B cell (primary cell): ENCODE measurements at regions of chr5 and their contacts with region 1.

Region 1: DNA sequence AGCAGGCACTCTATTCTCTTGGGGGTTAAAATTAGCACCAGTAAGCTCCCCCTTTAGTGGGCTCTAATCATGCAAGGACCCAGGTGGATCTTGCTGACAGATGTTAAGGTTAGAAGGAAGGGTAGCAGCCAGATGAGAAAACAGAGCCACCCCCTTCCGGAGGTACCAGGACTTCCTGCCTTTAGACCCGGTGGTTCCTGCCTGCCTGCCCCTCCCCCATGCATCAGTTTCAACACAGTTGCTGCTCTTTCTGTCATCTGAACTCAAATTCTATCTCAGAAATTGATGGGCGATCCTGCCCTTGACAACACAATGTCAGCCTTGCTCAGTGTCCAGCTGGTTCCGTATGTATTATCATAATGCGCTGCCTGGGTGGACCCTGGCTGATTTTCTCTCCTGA is 287.3 kb downstream of the EBF1 start:
- DNase-seq: peak; percentile 89
- ATAC-seq: peak; percentile 89
- H3K4me3 ChIP-seq: peak overlapping the region in 2 of 5 experiments; percentile 32 to 43
- H3K4me3 Mint-ChIP-seq: peak overlapping the region; percentile 72
- H3K27ac ChIP-seq: peak overlapping the region; percentile 80 to 87
- H3K27ac Mint-ChIP-seq: peak overlapping the region; percentile 93
- H3K4me1 ChIP-seq: peaks cover 89 to 100% of the 10 kb centered on the region in 2 donors
- H3K4me1 Mint-ChIP-seq: peaks cover 98% of the 10 kb centered on the region
- H3K27me3 ChIP-seq: no peaks in the 10 kb centered on the region
- H3K27me3 Mint-ChIP-seq: no peaks in the 10 kb centered on the region
- CTCF ChIP-seq: no peak

Region 2: GRCh38 chr5:158529454-158529853 is 283.0 kb before region 1 on chr5:
- CTCF ChIA-PET with region 1: no interaction called
- POLR2A ChIA-PET with region 1: no interaction called
- intact Hi-C with region 1: no loop called
- DNase-seq: no peak
- ATAC-seq: no peak
- H3K4me3 ChIP-seq: no peak overlapping the region
- H3K4me3 Mint-ChIP-seq: no peak overlapping the region
- H3K27ac ChIP-seq: no peak overlapping the region
- H3K27ac Mint-ChIP-seq: no peak overlapping the region
- H3K4me1 ChIP-seq: no peaks in the 10 kb centered on the region
- H3K4me1 Mint-ChIP-seq: no peaks in the 10 kb centered on the region
- H3K27me3 ChIP-seq: no peaks in the 10 kb centered on the region
- H3K27me3 Mint-ChIP-seq: no peaks in the 10 kb centered on the region
- CTCF ChIP-seq: no peak

Region 3: DNA sequence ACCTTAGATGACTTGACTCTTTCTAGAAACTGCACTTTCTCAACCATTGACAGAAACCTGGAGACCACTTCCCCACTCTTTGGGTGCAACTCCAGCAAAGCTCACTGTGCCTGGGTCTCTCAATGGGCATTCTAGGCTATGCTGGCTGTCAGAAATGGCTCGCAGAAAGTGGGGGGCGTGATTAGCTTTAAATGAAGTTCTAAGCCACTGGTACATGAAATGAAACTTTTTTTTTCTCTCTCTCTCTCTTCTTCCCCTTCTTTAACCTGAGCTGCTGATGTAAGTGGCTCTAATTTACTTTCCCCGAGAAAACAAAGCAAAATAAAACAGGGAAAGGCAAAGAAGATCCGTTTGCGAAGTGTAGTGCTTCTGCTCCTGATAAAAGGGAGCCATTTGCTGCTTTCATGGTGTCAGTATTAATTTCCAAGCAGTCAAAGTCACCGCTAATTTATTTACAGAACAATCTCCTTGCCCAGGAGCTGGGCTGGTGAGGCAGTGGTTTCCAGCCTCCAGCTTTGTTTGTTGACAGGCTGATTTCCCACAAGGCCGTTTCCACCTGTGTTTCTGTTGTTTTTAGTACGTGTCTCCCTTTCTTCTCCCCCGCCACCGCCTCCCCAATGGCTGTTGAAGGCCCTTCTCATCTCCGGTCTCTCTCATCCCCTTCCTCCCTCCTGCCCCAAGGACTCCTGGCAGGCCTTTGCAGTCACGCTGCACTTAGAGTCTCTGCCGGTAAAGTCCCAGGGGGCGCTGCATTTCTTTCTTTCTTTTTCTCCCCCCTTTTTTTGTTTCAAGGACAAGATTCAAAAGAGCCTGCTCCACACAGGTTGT is 135.6 kb before region 1 on chr5:
- CTCF ChIA-PET with region 1: no interaction called
- POLR2A ChIA-PET with region 1: no interaction called
- intact Hi-C with region 1: no loop called
- DNase-seq: peak; percentile 62
- ATAC-seq: peak; percentile 76
- H3K4me3 ChIP-seq: peak overlapping the region; percentile 15 to 48 (median 41)
- H3K4me3 Mint-ChIP-seq: peak overlapping the region; percentile 76
- H3K27ac ChIP-seq: peak overlapping the region; percentile 62 to 89
- H3K27ac Mint-ChIP-seq: peak overlapping the region; percentile 87
- H3K4me1 ChIP-seq: peaks cover 22 to 28% of the 10 kb centered on the region in 2 donors
- H3K4me1 Mint-ChIP-seq: peaks cover 28% of the 10 kb centered on the region
- H3K27me3 ChIP-seq: no peaks in the 10 kb centered on the region
- H3K27me3 Mint-ChIP-seq: no peaks in the 10 kb centered on the region
- CTCF ChIP-seq: peak; percentile 8

Region 4: DNA sequence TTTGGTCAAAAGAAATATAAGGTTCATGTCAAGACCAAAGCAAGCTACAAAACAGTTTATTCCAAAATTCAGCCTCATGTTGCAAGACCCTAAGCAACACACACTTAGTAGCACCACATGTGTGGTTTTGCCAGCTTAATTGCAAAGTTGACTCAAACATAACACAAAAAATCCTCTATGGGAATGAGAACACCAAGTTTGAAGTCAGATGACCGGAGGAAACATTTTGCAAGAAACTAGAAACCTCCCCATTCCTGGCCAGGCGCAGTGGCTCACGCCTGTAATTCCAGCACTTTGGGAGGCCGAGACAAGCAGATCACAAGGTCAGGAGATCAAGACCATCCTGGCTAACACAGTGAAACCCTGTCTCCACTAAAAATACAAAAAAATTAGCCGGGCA is 25.5 kb after region 1 on chr5:
- CTCF ChIA-PET with region 1: interaction called, 3 read pairs
- POLR2A ChIA-PET with region 1: interaction called, 3 read pairs
- intact Hi-C with region 1: loop called (anchors 2 kb)
- DNase-seq: no peak
- ATAC-seq: no peak
- H3K4me3 ChIP-seq: no peak overlapping the region
- H3K4me3 Mint-ChIP-seq: no peak overlapping the region
- H3K27ac ChIP-seq: no peak overlapping the region
- H3K27ac Mint-ChIP-seq: no peak overlapping the region
- H3K4me1 ChIP-seq: peaks cover 10 to 14% of the 10 kb centered on the region in 2 donors
- H3K4me1 Mint-ChIP-seq: peaks cover 71% of the 10 kb centered on the region
- H3K27me3 ChIP-seq: no peaks in the 10 kb centered on the region
- H3K27me3 Mint-ChIP-seq: no peaks in the 10 kb centered on the region
- CTCF ChIP-seq: no peak

Region 5: DNA sequence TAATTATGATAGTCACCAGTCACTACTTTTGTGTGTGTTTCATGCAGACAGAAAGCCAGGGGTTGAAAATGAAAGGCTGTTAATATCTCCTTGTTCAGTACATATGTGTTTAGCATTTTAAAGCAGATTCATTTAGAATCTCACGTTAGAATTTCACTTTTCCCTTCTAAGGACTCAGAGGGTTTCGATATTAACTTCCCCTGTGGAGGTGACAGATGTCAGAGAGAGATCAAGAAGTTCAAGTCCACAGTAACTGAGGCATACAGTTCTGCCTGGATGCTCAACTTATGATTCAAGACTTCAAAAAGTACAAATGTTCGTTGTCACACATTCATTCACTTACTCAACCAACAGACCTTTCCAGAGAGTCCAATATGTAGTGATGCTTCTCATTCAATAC is 36.2 kb after region 1 on chr5:
- CTCF ChIA-PET with region 1: no interaction called
- POLR2A ChIA-PET with region 1: no interaction called
- intact Hi-C with region 1: loop called (anchors 5 kb)
- DNase-seq: peak; percentile 58
- ATAC-seq: peak; percentile 40
- H3K4me3 ChIP-seq: peak overlapping the region in 2 of 5 experiments; percentile 1 to 21
- H3K4me3 Mint-ChIP-seq: peak overlapping the region; percentile 63
- H3K27ac ChIP-seq: peak overlapping the region; percentile 43 to 76
- H3K27ac Mint-ChIP-seq: peak overlapping the region; percentile 37
- H3K4me1 ChIP-seq: peaks cover 74 to 75% of the 10 kb centered on the region in 2 donors
- H3K4me1 Mint-ChIP-seq: peaks cover 85% of the 10 kb centered on the region
- H3K27me3 ChIP-seq: no peaks in the 10 kb centered on the region
- H3K27me3 Mint-ChIP-seq: no peaks in the 10 kb centered on the region
- CTCF ChIP-seq: no peak

Region 6: GRCh38 chr5:159061179-159061796 is 248.9 kb after region 1 on chr5:
- CTCF ChIA-PET with region 1: no interaction called
- POLR2A ChIA-PET with region 1: no interaction called
- intact Hi-C with region 1: no loop called
- DNase-seq: no peak
- ATAC-seq: no peak
- H3K4me3 ChIP-seq: no peak overlapping the region
- H3K4me3 Mint-ChIP-seq: no peak overlapping the region
- H3K27ac ChIP-seq: no peak overlapping the region
- H3K27ac Mint-ChIP-seq: no peak overlapping the region
- H3K4me1 ChIP-seq: peaks cover 11 to 23% of the 10 kb centered on the region in 2 donors
- H3K4me1 Mint-ChIP-seq: peaks cover 74% of the 10 kb centered on the region
- H3K27me3 ChIP-seq: no peaks in the 10 kb centered on the region
- H3K27me3 Mint-ChIP-seq: no peaks in the 10 kb centered on the region
- CTCF ChIP-seq: no peak